ENCODE measurements at regions of chr5 and their contacts with region 1.

Region 1: GRCh38 chr5:101751105-101751504 is 545.0 kb downstream of the SLCO4C1 start:
- DNase-seq: no peak
- H3K4me3 ChIP-seq: no peak overlapping the region
- H3K27ac ChIP-seq: no peak overlapping the region
- H3K4me1 ChIP-seq: no peaks in the 10 kb centered on the region
- H3K27me3 ChIP-seq: no peaks in the 10 kb centered on the region
- CTCF ChIP-seq: no peak

Region 2: DNA sequence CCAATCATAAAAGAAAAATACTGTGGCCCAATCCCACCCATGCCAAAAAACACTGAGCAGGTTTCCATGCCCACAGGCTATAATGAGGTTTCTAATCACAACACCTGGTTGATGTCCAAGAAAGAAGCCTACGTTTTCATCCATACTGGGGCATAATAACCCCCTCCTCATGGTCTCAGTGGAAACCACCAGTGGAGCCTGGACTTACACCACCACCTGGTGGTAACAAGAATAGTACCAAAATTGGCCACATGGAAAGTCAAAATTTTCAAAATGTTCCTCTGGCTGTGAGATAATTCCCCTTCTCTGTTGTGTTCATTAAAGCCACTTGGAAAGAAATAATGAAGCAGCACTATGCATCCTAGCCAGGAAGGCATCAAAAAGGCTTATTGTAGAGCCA is 160.7 kb before region 1 on chr5:
- CTCF ChIA-PET with region 1: no interaction called
- POLR2A ChIA-PET with region 1: no interaction called
- intact Hi-C with region 1: no loop called
- DNase-seq: no peak
- H3K4me3 ChIP-seq: no peak overlapping the region
- H3K27ac ChIP-seq: no peak overlapping the region
- H3K4me1 ChIP-seq: no peaks in the 10 kb centered on the region
- H3K27me3 ChIP-seq: no peaks in the 10 kb centered on the region
- CTCF ChIP-seq: peak; percentile 44; the same call in 1 of the 2 replicates

Region 3: DNA sequence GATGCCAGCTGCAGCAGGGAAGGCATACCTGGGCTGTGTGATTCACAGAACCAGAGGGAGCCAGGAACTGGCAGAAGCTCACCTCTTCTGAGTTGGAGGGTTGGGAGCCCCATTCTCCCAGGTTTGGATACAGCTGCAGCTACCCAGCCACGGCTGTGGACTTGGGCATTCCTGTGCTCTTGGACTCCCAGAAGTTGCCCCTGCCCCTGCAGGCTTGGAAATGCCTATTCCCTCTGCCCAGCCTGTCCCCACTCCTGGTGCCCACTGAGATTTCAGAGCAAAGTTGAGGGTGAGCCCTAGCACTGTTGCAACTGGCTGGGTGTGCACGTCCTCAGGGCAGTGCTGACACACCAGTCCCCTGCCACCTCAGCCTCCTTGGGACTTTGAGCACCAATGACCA is 55.3 kb after region 1 on chr5:
- CTCF ChIA-PET with region 1: no interaction called
- POLR2A ChIA-PET with region 1: interaction called, 22 read pairs
- intact Hi-C with region 1: no loop called
- DNase-seq: no peak
- H3K4me3 ChIP-seq: no peak overlapping the region
- H3K27ac ChIP-seq: no peak overlapping the region
- H3K4me1 ChIP-seq: no peaks in the 10 kb centered on the region
- H3K27me3 ChIP-seq: no peaks in the 10 kb centered on the region
- CTCF ChIP-seq: no peak

Measured in PC-9 (cell line).